ENCODE measurements at regions of chr3 and their contacts with region 1.

Region 1: DNA sequence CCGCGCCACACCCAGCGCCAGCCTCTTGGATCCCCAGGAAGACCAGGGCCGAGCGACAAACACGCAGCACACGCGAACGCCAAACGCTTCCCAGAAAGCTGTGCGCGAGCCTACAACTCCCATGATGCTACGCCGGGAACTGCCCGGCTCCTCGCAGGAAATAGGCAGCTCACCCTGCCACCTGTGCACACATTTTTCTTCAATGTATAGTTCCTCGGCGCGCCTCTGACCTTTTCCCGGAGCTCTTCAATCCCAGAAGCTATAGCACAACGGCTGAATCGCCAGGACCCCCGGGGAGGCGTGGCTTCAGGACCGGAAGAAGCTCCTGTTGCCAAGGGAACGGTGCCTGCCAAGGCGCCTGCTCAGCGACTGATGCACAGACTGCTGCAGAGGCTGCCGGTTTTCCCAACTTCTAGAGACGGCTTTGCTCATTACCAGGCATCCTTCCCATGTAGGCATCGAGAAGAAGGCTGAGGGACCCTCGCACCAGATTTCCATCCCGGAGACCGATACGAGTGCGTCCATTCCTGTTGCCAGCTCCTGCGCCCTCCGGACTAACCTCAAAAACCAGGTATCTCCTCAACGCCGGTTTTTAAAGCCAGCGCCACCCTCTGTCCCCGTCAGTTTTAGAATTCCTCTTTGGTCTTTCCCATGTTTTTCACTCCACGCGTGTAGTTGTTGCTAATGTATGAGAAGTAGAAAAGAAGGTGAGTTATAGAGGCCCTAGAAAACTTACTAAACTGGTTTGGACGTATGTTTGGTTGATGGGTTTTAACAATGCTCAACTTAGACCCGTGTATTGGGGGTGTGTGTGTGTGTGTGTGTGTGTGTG is at the start of gene ARL6:
- DNase-seq: peak; percentile 85
- ATAC-seq: peak; percentile 87
- H3K4me3 ChIP-seq: peak within 1 kb of the TSS; percentile 74 to 99 (median 96)
- H3K4me3 Mint-ChIP-seq: peak within 1 kb of the TSS; percentile 98
- H3K27ac ChIP-seq: peak within 1 kb of the TSS; percentile 69 to 74
- H3K27ac Mint-ChIP-seq: peak within 1 kb of the TSS; percentile 96
- H3K4me1 ChIP-seq: peaks cover 13% of the 10 kb centered on the region in 2 donors
- H3K4me1 Mint-ChIP-seq: peaks cover 30% of the 10 kb centered on the region
- H3K27me3 ChIP-seq: no peaks in the 10 kb centered on the region
- H3K27me3 Mint-ChIP-seq: no peaks in the 10 kb centered on the region
- CTCF ChIP-seq: no peak
- total RNA-seq, gene ARL6: 5.6 and 7.5 TPM in 2 replicates

Region 2: GRCh38 chr3:97575742-97576141 is 188.9 kb before region 1 on chr3:
- CTCF ChIA-PET with region 1: no interaction called
- POLR2A ChIA-PET with region 1: no interaction called
- intact Hi-C with region 1: no loop called
- DNase-seq: no peak
- ATAC-seq: no peak
- H3K4me3 ChIP-seq: no peak overlapping the region
- H3K4me3 Mint-ChIP-seq: no peak overlapping the region
- H3K27ac ChIP-seq: no peak overlapping the region
- H3K27ac Mint-ChIP-seq: no peak overlapping the region
- H3K4me1 ChIP-seq: no peaks in the 10 kb centered on the region
- H3K4me1 Mint-ChIP-seq: no peaks in the 10 kb centered on the region
- H3K27me3 ChIP-seq: no peaks in the 10 kb centered on the region
- H3K27me3 Mint-ChIP-seq: no peaks in the 10 kb centered on the region
- CTCF ChIP-seq: no peak

Region 3: DNA sequence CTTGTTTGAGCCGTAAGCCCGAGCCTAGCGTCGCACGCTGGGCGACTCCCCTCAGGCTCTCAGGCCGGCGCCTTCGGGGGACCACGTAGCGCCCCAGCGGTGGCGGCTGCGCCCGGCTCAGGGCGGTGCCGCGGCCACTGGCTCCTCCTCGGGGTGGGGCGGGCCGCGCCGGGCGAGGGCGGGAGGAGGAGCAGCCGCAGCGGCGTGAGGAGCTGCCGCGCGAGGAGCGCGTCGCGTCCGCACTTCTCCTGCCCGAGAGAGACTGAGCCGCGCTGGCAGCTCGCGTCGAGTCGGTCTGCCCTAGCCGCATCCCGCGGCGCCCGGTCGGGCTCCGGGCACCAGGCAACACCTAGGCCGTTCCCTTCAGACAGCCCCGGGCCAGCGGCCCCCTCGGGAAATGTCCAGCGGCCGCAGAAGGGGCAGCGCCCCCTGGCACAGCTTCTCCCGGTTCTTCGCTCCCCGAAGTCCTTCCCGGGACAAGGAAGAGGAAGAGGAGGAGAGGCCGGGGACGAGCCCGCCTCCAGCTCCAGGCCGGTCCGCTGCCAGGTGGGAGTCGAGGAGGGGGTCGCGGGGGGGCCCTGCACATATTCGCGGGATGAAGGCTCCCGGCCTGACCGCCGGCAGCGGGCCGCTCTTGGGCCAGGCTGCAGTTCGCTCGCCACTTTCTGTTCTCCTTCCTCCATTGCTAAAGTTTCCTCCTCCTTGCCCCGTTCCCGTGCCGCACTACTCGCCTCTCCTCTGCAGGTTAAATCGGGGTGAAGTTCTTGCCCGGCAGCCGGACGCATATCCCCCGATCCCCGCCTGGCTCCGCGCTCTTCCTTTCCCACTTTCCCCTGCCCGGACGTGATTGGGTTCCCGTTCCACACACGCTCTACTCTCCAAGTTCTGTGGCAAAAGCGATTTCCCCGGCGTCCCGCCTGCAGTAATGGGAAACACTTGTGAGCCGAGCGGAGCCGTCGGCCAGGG is 57.5 kb after region 1 on chr3 and contains the start of gene CRYBG3:
- CTCF ChIA-PET with region 1: no interaction called
- POLR2A ChIA-PET with region 1: no interaction called
- intact Hi-C with region 1: loop called (anchors 1 kb)
- DNase-seq: peak; percentile 87
- ATAC-seq: peak; percentile 99
- H3K4me3 ChIP-seq: peak within 1 kb of the TSS; percentile 65 to 93 (median 70)
- H3K4me3 Mint-ChIP-seq: peak within 1 kb of the TSS; percentile 95
- H3K27ac ChIP-seq: peak within 1 kb of the TSS in 1 of 2 donors; percentile 22
- H3K27ac Mint-ChIP-seq: peak within 1 kb of the TSS; percentile 85
- H3K4me1 ChIP-seq: peaks cover 15 to 17% of the 10 kb centered on the region in 2 donors
- H3K4me1 Mint-ChIP-seq: peaks cover 24% of the 10 kb centered on the region
- H3K27me3 ChIP-seq: peaks cover 0 to 26% (median 15%) of the 10 kb centered on the region in 4 experiments
- H3K27me3 Mint-ChIP-seq: peaks cover 55% of the 10 kb centered on the region
- CTCF ChIP-seq: no peak
- total RNA-seq, gene CRYBG3: 2.0 and 2.2 TPM in 2 replicates

Region 4: GRCh38 chr3:98901392-98902350 is 1137.0 kb after region 1 on chr3 and contains the start of gene DCBLD2:
- CTCF ChIA-PET with region 1: no interaction called
- POLR2A ChIA-PET with region 1: no interaction called
- intact Hi-C with region 1: loop called (anchors 2 kb)
- DNase-seq: peak; percentile 95
- ATAC-seq: peak; percentile 98
- H3K4me3 ChIP-seq: peak within 1 kb of the TSS; percentile 60 to 93 (median 68)
- H3K4me3 Mint-ChIP-seq: peak within 1 kb of the TSS; percentile 97
- H3K27ac ChIP-seq: peak within 1 kb of the TSS in 1 of 2 donors; percentile 64
- H3K27ac Mint-ChIP-seq: peak within 1 kb of the TSS; percentile 84
- H3K4me1 ChIP-seq: peaks cover 10 to 12% of the 10 kb centered on the region in 2 donors
- H3K4me1 Mint-ChIP-seq: peaks cover 17% of the 10 kb centered on the region
- H3K27me3 ChIP-seq: peaks cover 0 to 7% (median 2%) of the 10 kb centered on the region in 4 experiments
- H3K27me3 Mint-ChIP-seq: peaks cover 12% of the 10 kb centered on the region
- CTCF ChIP-seq: no peak
- total RNA-seq, gene DCBLD2: 2.1 and 3.5 TPM in 2 replicates